ENCODE measurements at regions of chr1 and their contacts with region 1.

Region 1: GRCh38 chr1:193059268-193060225 is at the starts of genes RO60 and UCHL5:
- H3K4me3 ChIP-seq: peak within 1 kb of the TSS; percentile 100
- H3K27ac ChIP-seq: peak within 1 kb of the TSS; percentile 93
- H3K4me1 ChIP-seq: no peaks in the 10 kb centered on the region
- CTCF ChIP-seq: peak; percentile 23; the same call in 1 of the 2 replicates

Region 2: GRCh38 chr1:192808518-192809306 is 250.8 kb before region 1 on chr1 and contains the start of gene RGS2:
- CTCF ChIA-PET with region 1: no interaction called
- POLR2A ChIA-PET with region 1: interaction called, 14 read pairs
- H3K4me3 ChIP-seq: peak within 1 kb of the TSS; percentile 86
- H3K27ac ChIP-seq: peak within 1 kb of the TSS; percentile 18; the same call in 1 of the 2 replicates
- H3K4me1 ChIP-seq: 0 out of 2 replicates have a peak, but pooled peaks cover 5% of the 10 kb centered on the region
- CTCF ChIP-seq: peak; percentile 53

Region 3: GRCh38 chr1:193013005-193013404 is 46.5 kb before region 1 on chr1:
- CTCF ChIA-PET with region 1: no interaction called
- POLR2A ChIA-PET with region 1: no interaction called
- H3K4me3 ChIP-seq: no peak overlapping the region
- H3K27ac ChIP-seq: no peak overlapping the region
- H3K4me1 ChIP-seq: no peaks in the 10 kb centered on the region
- CTCF ChIP-seq: no peak

Region 4: GRCh38 chr1:193070942-193071341 is 11.4 kb after region 1 on chr1:
- CTCF ChIA-PET with region 1: interaction called, 3 read pairs
- POLR2A ChIA-PET with region 1: interaction called, 10 read pairs
- H3K4me3 ChIP-seq: no peak overlapping the region
- H3K27ac ChIP-seq: no peak overlapping the region
- H3K4me1 ChIP-seq: peaks cover 9% of the 10 kb centered on the region
- CTCF ChIP-seq: no peak

Region 5: DNA sequence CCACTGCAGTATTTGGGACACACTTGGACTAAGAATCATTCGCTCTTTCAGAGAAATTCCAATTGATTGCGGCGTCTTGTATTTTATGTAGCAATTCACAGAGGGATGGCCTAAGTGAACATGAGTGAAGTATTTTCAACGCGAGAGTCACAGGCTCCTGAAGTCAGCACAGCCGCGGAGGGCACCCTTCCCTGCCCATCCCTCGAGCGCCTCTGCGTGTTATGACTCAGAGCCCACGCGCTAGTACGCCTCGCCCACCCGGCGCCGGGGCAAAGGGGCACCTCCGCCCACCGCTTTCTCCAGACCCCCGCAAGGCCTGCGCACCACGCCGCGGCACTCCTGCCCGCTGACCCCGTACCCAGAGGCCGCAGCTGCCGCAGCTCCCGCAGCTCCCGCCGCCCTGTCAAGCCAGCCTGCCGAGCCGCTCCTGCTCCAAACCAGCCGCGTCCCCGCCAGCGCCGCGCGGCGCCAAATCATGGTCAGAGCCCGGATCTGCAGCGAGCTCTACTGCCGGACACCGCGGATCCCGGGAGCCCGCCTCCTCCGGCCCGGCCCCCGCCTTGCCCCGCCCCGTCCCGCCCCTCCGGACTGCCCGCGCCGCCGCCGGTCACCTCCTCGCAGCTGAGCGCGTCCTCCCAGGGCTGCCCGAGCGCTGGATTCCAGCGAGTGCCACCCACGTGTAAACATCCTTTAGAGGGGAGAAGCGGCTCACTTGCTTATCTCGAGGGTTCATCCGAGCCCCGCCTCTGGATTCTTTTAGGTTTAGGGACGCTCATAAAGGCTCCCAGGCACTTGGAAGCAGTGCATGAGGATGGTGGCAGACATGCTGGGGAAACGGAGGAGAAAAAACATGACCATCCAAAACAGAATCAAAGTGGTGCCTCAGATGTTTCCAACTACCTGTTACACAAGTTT is 45.6 kb after region 1 on chr1 and contains the start of gene GLRX2:
- CTCF ChIA-PET with region 1: no interaction called
- POLR2A ChIA-PET with region 1: interaction called, 28 read pairs
- H3K4me3 ChIP-seq: peak within 1 kb of the TSS; percentile 77
- H3K27ac ChIP-seq: peak within 1 kb of the TSS; percentile 73
- H3K4me1 ChIP-seq: no peaks in the 10 kb centered on the region
- CTCF ChIP-seq: peak; percentile 41; the same call in 1 of the 2 replicates

Region 6: DNA sequence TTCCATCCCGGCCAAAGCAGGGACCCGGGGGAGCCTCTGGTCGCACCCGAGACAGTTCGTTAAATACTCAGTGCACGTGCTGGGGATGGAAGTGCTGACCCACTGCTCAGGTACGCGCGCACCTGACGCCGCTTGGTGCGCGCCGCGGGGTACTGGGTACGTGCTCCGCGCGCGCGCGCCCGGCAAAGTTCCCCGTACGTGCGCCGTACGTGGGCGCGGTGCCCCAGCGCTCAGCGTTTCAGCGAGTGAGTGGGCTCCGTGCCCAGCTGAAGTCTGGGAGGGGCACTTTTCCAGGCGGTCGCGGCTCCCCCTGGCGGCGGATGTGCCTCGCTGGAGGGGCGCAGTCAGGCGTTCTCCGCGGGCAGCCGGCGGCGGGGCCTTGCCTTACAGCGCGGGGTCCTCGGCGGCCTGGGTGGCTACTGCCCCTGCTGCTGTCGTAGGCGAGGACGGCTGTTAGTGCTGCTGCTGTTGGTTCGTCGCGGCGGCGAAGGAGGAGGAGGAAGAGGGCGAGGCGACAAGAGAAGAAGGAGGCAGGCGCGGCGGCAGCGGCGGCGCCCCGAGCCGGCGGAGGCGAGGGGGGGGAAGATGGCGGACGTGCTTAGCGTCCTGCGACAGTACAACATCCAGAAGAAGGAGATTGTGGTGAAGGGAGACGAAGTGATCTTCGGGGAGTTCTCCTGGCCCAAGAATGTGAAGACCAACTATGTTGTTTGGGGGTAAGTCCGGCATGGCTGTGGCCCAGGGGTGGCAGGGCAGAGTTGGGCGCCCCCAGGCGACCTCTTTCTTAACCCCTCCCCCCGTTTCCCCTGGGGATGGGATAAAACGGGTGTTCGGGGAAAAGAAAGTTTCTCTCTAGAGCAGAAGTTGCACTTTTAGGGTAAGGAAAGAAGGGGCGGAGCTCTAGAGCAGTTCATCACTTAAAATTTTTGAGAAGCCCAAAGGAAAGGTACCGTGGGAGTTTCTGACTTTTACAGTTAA is 62.4 kb after region 1 on chr1 and contains the start of gene CDC73:
- CTCF ChIA-PET with region 1: interaction called, 5 read pairs
- POLR2A ChIA-PET with region 1: interaction called, 25 read pairs
- H3K4me3 ChIP-seq: peak within 1 kb of the TSS; percentile 60
- H3K27ac ChIP-seq: peak within 1 kb of the TSS; percentile 92
- H3K4me1 ChIP-seq: no peaks in the 10 kb centered on the region
- CTCF ChIP-seq: peak; percentile 100

Measured in HEK293 (cell line).